PC-9 (cell line): ENCODE measurements at regions of chr9 and their contacts with region 1.

Region 1: GRCh38 chr9:91036826-91037510 is 235.3 kb downstream of the SYK start:
- DNase-seq: peak; percentile 84 to 87
- H3K4me3 ChIP-seq: no peak overlapping the region; the same call in 1 of the 2 replicates
- H3K27ac ChIP-seq: peak overlapping the region; percentile 92
- H3K4me1 ChIP-seq: peaks cover 51% of the 10 kb centered on the region
- H3K27me3 ChIP-seq: no peaks in the 10 kb centered on the region
- CTCF ChIP-seq: peak; percentile 68

Region 2: GRCh38 chr9:91001146-91001611 is 35.8 kb before region 1 on chr9:
- CTCF ChIA-PET with region 1: no interaction called
- POLR2A ChIA-PET with region 1: no interaction called
- intact Hi-C with region 1: loop called (anchors 1 kb)
- DNase-seq: peak; percentile 94 to 98
- H3K4me3 ChIP-seq: no peak overlapping the region
- H3K27ac ChIP-seq: peak overlapping the region; percentile 74
- H3K4me1 ChIP-seq: peaks cover 22% of the 10 kb centered on the region
- H3K27me3 ChIP-seq: no peaks in the 10 kb centered on the region
- CTCF ChIP-seq: no peak

Region 3: GRCh38 chr9:91071185-91071990 is 34.4 kb after region 1 on chr9:
- CTCF ChIA-PET with region 1: no interaction called
- POLR2A ChIA-PET with region 1: no interaction called
- intact Hi-C with region 1: loop called (anchors 2 kb)
- DNase-seq: peak; percentile 82 to 94
- H3K4me3 ChIP-seq: peak overlapping the region; percentile 23; the same call in 1 of the 2 replicates
- H3K27ac ChIP-seq: peak overlapping the region; percentile 87
- H3K4me1 ChIP-seq: peaks cover 23% of the 10 kb centered on the region
- H3K27me3 ChIP-seq: no peaks in the 10 kb centered on the region
- CTCF ChIP-seq: no peak

Region 4: DNA sequence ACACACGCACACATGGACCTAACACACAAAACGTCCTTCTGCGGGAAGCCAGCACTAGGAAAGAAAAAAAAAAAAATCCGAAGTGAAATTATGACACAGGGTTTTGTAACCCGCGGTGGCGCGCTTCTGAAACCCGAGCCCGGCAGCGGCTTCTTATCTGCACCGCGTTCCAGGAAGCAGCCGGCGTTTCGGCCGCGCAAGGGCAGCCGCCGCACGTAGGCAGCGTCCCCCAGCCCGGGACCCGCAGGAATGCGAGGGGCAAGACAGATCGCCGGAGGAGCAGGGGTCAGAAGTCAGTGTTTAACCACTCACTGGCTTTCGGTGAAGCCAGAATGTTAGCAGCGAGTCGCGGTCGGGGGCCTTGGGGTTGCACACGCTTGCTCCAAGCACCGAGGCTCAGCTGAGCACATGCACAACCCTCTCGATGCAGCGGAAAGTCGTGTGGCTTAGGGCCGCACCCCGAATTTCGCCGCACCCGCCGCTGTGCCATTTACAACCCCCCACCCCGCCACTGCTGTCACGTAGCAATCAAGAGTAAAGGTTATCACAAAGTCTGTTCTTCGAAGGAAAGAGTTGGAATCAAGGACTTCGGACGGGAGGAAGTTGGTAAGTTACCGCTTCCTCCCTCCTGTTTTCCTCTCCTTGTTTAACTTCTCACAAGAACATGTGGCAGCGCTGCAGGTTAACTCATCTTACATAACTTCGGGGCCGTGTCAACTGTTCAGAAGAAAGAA is 156.9 kb after region 1 on chr9:
- CTCF ChIA-PET with region 1: no interaction called
- POLR2A ChIA-PET with region 1: no interaction called
- intact Hi-C with region 1: loop called (anchors 2 kb)
- DNase-seq: peak; percentile 85 to 86
- H3K4me3 ChIP-seq: peak overlapping the region; percentile 66
- H3K27ac ChIP-seq: peak overlapping the region; percentile 99
- H3K4me1 ChIP-seq: peaks cover 63% of the 10 kb centered on the region
- H3K27me3 ChIP-seq: no peaks in the 10 kb centered on the region
- CTCF ChIP-seq: no peak; the same call in 1 of the 2 replicates

Region 5: DNA sequence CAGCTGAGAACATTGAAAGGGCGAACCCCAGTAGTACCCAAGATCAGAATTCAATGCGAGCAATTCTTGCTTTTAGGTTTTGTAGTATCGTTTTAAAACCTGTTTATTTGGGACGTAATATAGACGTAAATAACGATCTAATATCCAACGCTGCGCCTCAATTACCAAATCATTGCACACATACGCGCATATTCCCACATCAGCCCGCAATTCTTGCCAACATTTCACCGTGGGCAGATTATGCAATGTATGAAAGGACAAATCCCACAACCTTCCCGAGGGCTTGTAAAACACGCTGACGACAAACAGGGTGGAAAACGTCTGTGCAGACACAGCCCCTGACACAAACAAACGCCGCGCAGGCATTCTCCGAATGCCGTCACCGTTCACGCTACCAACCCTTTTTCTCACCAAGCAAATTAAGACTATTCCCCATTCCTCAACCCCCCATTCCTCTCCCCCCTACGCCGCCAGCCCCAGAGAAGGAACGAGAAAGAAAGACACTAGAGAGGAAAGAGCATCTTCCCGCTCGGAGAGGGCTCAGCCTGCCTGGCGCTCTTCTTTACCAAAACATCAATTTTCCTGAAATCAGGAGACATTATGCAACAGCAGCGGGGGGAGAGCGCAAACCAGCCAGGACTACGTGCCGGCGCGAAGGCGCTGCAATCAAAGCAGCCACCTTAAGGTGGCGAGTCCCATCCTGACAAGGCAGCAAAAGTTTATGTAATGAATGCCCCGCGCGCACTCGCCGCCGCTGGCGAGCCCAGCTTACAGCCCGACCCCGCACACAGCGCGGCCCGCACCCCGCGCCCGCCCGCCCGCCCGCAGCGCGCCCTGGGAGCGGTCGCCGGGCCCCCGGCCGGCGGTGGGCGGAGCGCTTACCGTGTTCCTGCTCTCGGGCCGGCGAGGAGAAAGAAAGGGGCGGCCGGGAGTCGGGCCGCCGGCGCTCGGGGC is 386.1 kb after region 1 on chr9:
- CTCF ChIA-PET with region 1: interaction called, 5 read pairs
- POLR2A ChIA-PET with region 1: interaction called, 26 read pairs
- intact Hi-C with region 1: loop called (anchors 1 kb)
- DNase-seq: peak; percentile 57 to 65
- H3K4me3 ChIP-seq: peak overlapping the region; percentile 91
- H3K27ac ChIP-seq: peak overlapping the region; percentile 71
- H3K4me1 ChIP-seq: peaks cover 49% of the 10 kb centered on the region
- H3K27me3 ChIP-seq: no peaks in the 10 kb centered on the region
- CTCF ChIP-seq: no peak

Region 6: DNA sequence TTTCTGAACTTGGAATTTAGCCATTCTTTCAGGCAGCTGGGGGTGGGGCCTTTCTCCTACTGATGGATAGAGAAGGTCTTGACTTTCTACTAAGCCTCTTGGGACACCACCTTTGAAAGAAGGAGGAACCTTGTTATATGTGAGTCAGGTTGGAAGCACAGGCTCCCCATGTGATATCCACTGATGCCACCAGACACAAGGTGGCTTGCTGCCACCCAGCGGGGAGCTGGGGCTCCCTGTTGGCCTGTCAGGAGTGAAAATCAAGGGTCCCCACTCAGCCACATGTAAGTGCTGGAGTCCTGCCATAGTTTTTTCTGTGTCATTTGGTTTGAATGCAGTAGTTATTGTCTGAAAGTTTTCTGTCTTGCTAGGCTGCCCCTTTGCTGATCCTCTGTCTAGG is 639.1 kb after region 1 on chr9:
- CTCF ChIA-PET with region 1: no interaction called
- POLR2A ChIA-PET with region 1: no interaction called
- intact Hi-C with region 1: loop called (anchors 1 kb)
- DNase-seq: peak; percentile 51 to 64
- H3K4me3 ChIP-seq: no peak overlapping the region
- H3K27ac ChIP-seq: no peak overlapping the region
- H3K4me1 ChIP-seq: no peaks in the 10 kb centered on the region
- H3K27me3 ChIP-seq: no peaks in the 10 kb centered on the region
- CTCF ChIP-seq: peak; percentile 74